Activated CD4-positive, alpha-beta T cell treated with anti-CD3 and anti-CD28 coated beads for 36 hours (primary cell): ENCODE measurements at regions of chr11 and their contacts with region 1.

Region 1: GRCh38 chr11:47373876-47374720 is 4.2 kb downstream of the SPI1 start:
- DNase-seq: peak; percentile 92
- ATAC-seq: peak; percentile 89
- H3K4me3 Mint-ChIP-seq: no peak overlapping the region
- H3K27ac Mint-ChIP-seq: peak overlapping the region; percentile 25
- H3K4me1 Mint-ChIP-seq: peaks cover 22% of the 10 kb centered on the region
- H3K27me3 Mint-ChIP-seq: no peaks in the 10 kb centered on the region

Region 2: GRCh38 chr11:46896719-46897406 is 477.2 kb before region 1 on chr11:
- CTCF ChIA-PET with region 1: no interaction called
- POLR2A ChIA-PET with region 1: no interaction called
- intact Hi-C with region 1: no loop called
- DNase-seq: no peak
- ATAC-seq: peak; percentile 55
- H3K4me3 Mint-ChIP-seq: no peak overlapping the region
- H3K27ac Mint-ChIP-seq: no peak overlapping the region
- H3K4me1 Mint-ChIP-seq: no peaks in the 10 kb centered on the region
- H3K27me3 Mint-ChIP-seq: no peaks in the 10 kb centered on the region

Region 3: DNA sequence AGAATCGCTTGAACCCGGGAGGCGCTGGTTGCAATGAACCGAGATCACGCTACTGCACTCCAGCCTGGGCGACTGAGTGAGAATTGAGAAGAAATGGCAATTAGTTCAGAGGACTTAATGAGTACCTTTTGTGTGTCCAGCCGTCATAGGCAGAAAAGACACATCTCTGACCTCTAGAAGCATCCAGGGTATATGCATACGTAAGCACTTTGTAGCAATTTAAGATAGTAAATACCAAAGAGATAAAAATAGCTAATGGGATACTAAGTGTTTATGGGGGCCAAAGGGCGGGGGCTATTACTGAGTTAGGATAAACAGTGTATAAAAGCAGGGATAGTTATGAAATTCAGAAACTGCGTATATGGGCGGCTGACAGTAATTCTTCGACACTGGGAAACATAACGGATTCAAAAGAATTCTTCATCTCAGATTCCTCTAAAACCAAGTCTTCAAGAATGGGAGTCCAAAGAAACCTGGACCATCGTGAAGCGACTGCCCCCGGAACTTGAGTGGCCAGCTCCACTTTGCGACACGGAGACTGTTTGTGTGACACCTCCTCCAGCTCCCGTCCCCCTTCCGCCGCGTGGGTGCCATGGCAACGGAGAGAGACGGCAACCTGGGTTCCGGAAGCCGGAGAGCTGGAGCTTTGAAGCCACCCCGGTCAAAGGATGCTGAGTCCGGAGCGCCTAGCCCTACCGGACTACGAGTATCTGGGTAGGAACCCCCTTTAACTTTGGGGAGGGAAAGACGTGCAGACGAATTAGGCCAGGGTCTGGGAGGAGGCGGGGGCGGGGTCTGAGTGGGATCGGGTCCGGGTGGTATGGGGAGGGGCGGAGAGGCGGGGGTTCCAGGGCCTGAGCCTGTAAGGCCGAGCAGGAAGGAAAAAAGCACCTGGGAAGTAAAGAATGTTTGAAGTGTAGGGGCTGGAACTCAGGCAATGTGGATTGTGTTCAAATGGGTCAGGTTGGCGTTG is 437.7 kb before region 1 on chr11 and contains the start of gene CSTPP1:
- CTCF ChIA-PET with region 1: no interaction called
- POLR2A ChIA-PET with region 1: no interaction called
- intact Hi-C with region 1: no loop called
- DNase-seq: peak; percentile 97
- ATAC-seq: peak; percentile 96
- H3K4me3 Mint-ChIP-seq: peak within 1 kb of the TSS; percentile 86
- H3K27ac Mint-ChIP-seq: peak within 1 kb of the TSS; percentile 88
- H3K4me1 Mint-ChIP-seq: peaks cover 16% of the 10 kb centered on the region
- H3K27me3 Mint-ChIP-seq: peaks cover 5% of the 10 kb centered on the region
- total RNA-seq, gene CSTPP1: 17.9 to 18.6 TPM

Region 4: GRCh38 chr11:47331454-47332302 is 42.4 kb before region 1 on chr11:
- CTCF ChIA-PET with region 1: no interaction called
- POLR2A ChIA-PET with region 1: no interaction called
- intact Hi-C with region 1: no loop called
- DNase-seq: no peak
- ATAC-seq: no peak
- H3K4me3 Mint-ChIP-seq: no peak overlapping the region
- H3K27ac Mint-ChIP-seq: no peak overlapping the region
- H3K4me1 Mint-ChIP-seq: no peaks in the 10 kb centered on the region
- H3K27me3 Mint-ChIP-seq: no peaks in the 10 kb centered on the region

Region 5: GRCh38 chr11:47355283-47356128 is 18.6 kb before region 1 on chr11:
- CTCF ChIA-PET with region 1: interaction called, 14 read pairs
- POLR2A ChIA-PET with region 1: interaction called, 3 read pairs
- intact Hi-C with region 1: no loop called
- DNase-seq: peak; percentile 80
- ATAC-seq: peak; percentile 39
- H3K4me3 Mint-ChIP-seq: no peak overlapping the region
- H3K27ac Mint-ChIP-seq: no peak overlapping the region
- H3K4me1 Mint-ChIP-seq: peaks cover 12% of the 10 kb centered on the region
- H3K27me3 Mint-ChIP-seq: no peaks in the 10 kb centered on the region

Region 6: GRCh38 chr11:47394322-47395222 is 20.5 kb after region 1 on chr11:
- CTCF ChIA-PET with region 1: interaction called, 21 read pairs
- POLR2A ChIA-PET with region 1: no interaction called
- intact Hi-C with region 1: loop called in 1 of 2 experiments (anchors 1 kb)
- DNase-seq: peak; percentile 80
- ATAC-seq: peak; percentile 89
- H3K4me3 Mint-ChIP-seq: peak overlapping the region; percentile 23
- H3K27ac Mint-ChIP-seq: peak overlapping the region; percentile 95
- H3K4me1 Mint-ChIP-seq: peaks cover 23% of the 10 kb centered on the region
- H3K27me3 Mint-ChIP-seq: no peaks in the 10 kb centered on the region

Region 7: DNA sequence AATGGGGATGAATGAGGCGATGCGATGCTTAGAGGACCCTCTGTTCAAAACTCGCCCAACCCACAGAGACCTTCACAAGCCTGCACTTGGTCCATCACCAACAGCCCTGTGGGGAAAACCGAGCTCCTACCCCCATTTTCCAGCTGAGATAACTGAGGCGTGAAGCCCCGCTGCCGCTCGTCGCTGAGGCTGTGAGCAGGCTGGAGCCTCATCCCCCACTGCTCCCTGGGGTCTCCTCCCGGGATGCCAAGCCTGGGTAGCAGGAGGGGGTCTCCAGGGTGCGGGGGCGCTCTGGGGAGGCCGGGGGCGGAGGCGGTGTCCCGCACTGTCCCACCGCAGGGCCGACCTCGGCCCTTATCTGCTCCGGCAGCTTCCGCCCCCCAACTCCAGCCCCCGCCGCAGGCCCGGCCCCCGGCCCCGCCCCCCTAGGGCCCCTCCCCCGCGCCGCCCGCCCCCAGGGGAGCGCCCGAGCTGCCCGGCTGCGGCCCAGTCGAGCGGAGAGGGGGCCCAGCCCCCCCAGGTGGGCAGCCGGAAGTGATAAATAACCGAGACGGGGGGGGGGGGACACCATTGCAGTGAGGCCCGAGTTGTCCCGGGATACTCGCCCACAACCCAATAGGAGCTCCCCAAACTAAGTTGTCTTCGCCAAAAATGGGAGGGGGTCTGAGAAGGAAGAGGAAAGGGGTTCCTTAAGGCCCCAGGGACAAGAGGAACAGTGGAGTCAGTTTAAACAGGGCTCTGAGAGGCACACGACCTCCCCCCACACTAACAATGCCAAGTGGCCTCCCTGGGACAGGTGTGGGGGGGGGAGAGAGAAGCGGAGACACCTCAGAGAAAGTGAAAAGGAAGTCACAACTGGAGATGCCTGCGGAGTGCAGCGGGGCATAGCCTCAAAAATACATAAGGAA is 26.0 kb after region 1 on chr11:
- CTCF ChIA-PET with region 1: interaction called, 21 read pairs
- POLR2A ChIA-PET with region 1: no interaction called
- intact Hi-C with region 1: no loop called
- DNase-seq: peak; percentile 46
- ATAC-seq: peak; percentile 77
- H3K4me3 Mint-ChIP-seq: peak overlapping the region; percentile 67
- H3K27ac Mint-ChIP-seq: peak overlapping the region; percentile 82
- H3K4me1 Mint-ChIP-seq: peaks cover 16% of the 10 kb centered on the region
- H3K27me3 Mint-ChIP-seq: no peaks in the 10 kb centered on the region

Region 8: DNA sequence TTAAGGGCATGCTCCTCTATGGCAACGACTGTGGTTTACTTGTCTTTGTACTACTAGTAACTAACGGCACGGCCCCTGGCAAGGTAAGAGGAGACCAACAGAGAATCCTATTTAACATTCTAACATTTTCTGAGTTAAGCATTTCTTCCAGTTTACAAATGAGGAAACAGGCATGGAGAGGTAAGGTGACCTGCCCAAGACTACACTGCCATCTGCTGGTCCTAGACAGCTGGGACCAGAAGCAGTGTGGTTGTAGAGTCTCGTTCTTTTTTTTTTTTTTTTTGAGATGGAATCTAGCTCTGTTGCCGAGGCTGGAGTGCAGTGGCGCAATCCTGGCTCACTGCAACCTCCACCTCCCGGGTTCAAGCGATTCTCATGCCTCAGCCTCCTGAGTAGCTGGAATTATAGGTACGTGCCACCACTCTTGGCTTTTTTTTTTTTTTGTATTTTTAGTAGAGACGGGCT is 80.1 kb after region 1 on chr11:
- CTCF ChIA-PET with region 1: interaction called, 5 read pairs
- POLR2A ChIA-PET with region 1: no interaction called
- intact Hi-C with region 1: loop called (anchors 1 kb)
- DNase-seq: peak; percentile 81
- ATAC-seq: peak; percentile 97
- H3K4me3 Mint-ChIP-seq: no peak overlapping the region
- H3K27ac Mint-ChIP-seq: no peak overlapping the region
- H3K4me1 Mint-ChIP-seq: no peaks in the 10 kb centered on the region
- H3K27me3 Mint-ChIP-seq: no peaks in the 10 kb centered on the region

Region 9: DNA sequence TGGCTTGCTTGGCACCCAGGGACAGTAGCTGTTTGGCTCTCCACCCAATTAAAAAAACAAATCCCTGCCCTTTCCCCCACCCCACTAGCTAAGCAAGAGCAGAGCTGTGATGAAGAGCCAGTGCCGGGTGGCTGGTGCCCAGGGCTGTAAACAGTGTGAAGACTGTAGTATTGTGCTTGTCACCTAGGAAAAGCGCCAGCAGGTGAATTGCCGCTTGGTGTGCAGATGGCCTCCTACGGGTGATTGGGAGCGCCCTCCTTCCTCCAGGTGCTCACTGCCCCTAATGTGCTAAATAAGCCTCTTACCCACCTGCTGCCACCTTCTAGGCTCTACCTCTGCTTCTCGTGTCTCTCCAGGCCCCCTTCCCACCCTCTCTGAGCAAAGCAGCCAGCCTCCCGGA is 93.3 kb after region 1 on chr11:
- CTCF ChIA-PET with region 1: no interaction called
- POLR2A ChIA-PET with region 1: no interaction called
- intact Hi-C with region 1: no loop called
- DNase-seq: no peak
- ATAC-seq: no peak
- H3K4me3 Mint-ChIP-seq: no peak overlapping the region
- H3K27ac Mint-ChIP-seq: peak overlapping the region; percentile 26
- H3K4me1 Mint-ChIP-seq: peaks cover 5% of the 10 kb centered on the region
- H3K27me3 Mint-ChIP-seq: no peaks in the 10 kb centered on the region